ENCODE measurements at regions of chr18 and their contacts with region 1.

Region 1: DNA sequence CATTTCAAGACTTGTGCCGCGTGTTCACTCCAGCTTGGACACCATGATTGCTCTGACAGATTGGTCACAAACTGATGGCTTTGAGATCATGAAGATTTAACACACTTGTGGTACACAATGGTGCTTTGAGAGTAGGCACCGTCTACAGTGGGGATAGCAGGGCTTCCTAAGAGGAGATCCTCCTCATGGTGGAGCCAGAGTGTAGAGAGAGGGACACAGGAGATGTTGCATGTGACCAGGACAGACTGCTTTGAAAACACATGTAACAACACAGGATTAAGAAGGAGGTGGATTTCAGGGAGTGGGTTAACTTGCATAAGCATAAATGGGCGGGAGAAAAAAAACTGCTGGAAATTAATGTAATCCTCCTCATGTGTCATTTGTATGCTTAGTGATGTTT is 95.7 kb upstream of the LINC00305 start:
- DNase-seq: peak; percentile 32 to 41
- H3K4me3 ChIP-seq: no peak overlapping the region
- H3K4me3 Mint-ChIP-seq: no peak overlapping the region
- H3K27ac Mint-ChIP-seq: peak overlapping the region; percentile 16
- H3K4me1 ChIP-seq: no peaks in the 10 kb centered on the region
- H3K4me1 Mint-ChIP-seq: no peaks in the 10 kb centered on the region
- H3K27me3 ChIP-seq: no peaks in the 10 kb centered on the region
- H3K27me3 Mint-ChIP-seq: no peaks in the 10 kb centered on the region
- CTCF ChIP-seq: peak in 1 of 2 experiments; percentile 42

Region 2: GRCh38 chr18:64330161-64330560 is 85.6 kb after region 1 on chr18:
- CTCF ChIA-PET with region 1: no interaction called
- POLR2A ChIA-PET with region 1: no interaction called
- intact Hi-C with region 1: loop called (anchors 1 kb)
- DNase-seq: peak in 1 of 2 experiments; percentile 21
- H3K4me3 ChIP-seq: no peak overlapping the region
- H3K4me3 Mint-ChIP-seq: no peak overlapping the region
- H3K27ac Mint-ChIP-seq: no peak overlapping the region
- H3K4me1 ChIP-seq: no peaks in the 10 kb centered on the region
- H3K4me1 Mint-ChIP-seq: no peaks in the 10 kb centered on the region
- H3K27me3 ChIP-seq: no peaks in the 10 kb centered on the region
- H3K27me3 Mint-ChIP-seq: no peaks in the 10 kb centered on the region
- CTCF ChIP-seq: peak in 1 of 2 experiments; percentile 5

Region 3: DNA sequence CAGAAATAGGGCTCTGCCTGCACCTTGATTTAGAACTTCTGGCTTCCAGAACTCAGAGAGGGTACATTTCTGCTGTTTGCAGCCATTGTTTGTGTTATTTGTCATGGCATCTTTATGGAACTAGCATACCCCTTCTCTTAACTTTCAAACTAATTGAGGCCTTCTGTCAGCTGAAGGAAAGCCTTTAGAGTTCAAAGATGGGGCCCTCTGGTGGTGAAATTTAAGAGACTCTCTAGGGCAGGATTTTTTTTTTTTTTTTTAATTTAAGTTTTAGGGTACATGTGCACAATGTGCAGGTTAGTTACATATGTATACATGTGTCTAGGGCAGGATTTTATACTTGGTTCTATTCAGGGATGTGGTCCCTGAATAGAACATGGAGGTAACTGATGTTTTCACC is 164.9 kb after region 1 on chr18:
- CTCF ChIA-PET with region 1: interaction called, 3 read pairs
- POLR2A ChIA-PET with region 1: no interaction called
- intact Hi-C with region 1: loop called (anchors 1 kb)
- DNase-seq: peak in 1 of 2 experiments; percentile 14
- H3K4me3 ChIP-seq: no peak overlapping the region
- H3K4me3 Mint-ChIP-seq: no peak overlapping the region
- H3K27ac Mint-ChIP-seq: no peak overlapping the region
- H3K4me1 ChIP-seq: no peaks in the 10 kb centered on the region
- H3K4me1 Mint-ChIP-seq: peaks cover 7% of the 10 kb centered on the region
- H3K27me3 ChIP-seq: no peaks in the 10 kb centered on the region
- H3K27me3 Mint-ChIP-seq: no peaks in the 10 kb centered on the region
- CTCF ChIP-seq: peak; percentile 19 to 24

Region 4: GRCh38 chr18:64614446-64614845 is 369.9 kb after region 1 on chr18:
- CTCF ChIA-PET with region 1: no interaction called
- POLR2A ChIA-PET with region 1: no interaction called
- intact Hi-C with region 1: no loop called
- DNase-seq: no peak
- H3K4me3 ChIP-seq: no peak overlapping the region
- H3K4me3 Mint-ChIP-seq: no peak overlapping the region
- H3K27ac Mint-ChIP-seq: no peak overlapping the region
- H3K4me1 ChIP-seq: no peaks in the 10 kb centered on the region
- H3K4me1 Mint-ChIP-seq: no peaks in the 10 kb centered on the region
- H3K27me3 ChIP-seq: no peaks in the 10 kb centered on the region
- H3K27me3 Mint-ChIP-seq: no peaks in the 10 kb centered on the region
- CTCF ChIP-seq: no peak